Naive thymus-derived CD4-positive, alpha-beta T cell (primary cell): ENCODE measurements at regions of chr17 and their contacts with region 1.

Region 1: GRCh38 chr17:5584383-5585286 is at the start of gene NLRP1:
- DNase-seq: peak; percentile 78 to 97 (median 95)
- ATAC-seq: peak; percentile 96
- H3K4me3 ChIP-seq: peak within 1 kb of the TSS; percentile 97
- H3K4me3 Mint-ChIP-seq: peak within 1 kb of the TSS; percentile 94 to 100 (median 98)
- H3K27ac ChIP-seq: peak within 1 kb of the TSS; percentile 94
- H3K27ac Mint-ChIP-seq: peak within 1 kb of the TSS; percentile 90 to 100 (median 99)
- H3K4me1 ChIP-seq: peaks cover 44 to 67% of the 10 kb centered on the region in 2 donors
- H3K4me1 Mint-ChIP-seq: peaks cover 43 to 74% (median 63%) of the 10 kb centered on the region in 7 donors
- H3K27me3 ChIP-seq: no peaks in the 10 kb centered on the region
- H3K27me3 Mint-ChIP-seq: peaks cover 0 to 12% (median 0%) of the 10 kb centered on the region in 5 donors
- total RNA-seq, gene NLRP1: 86.6 to 360 (median 259) TPM

Region 2: DNA sequence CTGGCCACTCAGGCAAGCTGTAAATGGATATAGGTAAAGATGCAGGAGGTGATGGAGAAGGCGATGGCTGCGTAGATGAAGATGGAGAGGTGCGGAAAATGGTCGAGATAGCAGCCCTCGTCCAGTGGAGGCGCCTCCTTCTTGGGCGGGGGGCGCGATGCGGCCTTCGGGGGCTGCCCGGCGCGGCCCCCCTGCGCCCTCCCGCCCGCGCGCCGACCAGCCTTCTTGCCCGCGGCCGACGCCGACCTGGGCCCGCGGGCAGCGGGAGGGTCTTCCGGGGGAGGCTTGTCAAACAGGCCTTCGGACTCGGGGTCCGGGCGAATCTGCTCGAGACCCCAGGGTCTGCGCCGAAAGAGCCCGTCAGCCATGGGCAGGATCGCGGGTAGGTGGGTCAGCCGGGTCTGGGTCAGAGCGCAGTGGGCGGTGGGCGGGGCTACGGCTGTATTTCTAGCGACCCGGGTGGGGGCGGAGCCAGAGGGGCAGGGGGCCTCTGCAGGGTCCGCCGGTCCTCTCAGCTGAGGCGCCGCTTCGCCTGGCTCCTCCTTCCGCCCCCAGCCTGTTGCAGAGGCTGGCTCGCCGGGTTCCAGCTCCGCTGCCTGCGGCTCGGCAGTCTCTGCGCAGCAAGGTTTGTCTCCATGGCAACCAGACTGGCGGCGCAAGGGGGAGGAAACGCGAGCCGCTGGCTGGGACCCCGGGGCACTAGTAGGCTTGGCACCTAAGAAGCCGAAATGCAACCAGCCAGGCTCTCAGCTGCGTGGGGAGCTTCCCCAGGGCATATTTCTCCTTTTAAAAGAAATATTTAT is 83.8 kb before region 1 on chr17:
- CTCF ChIA-PET with region 1: no interaction called
- POLR2A ChIA-PET with region 1: no interaction called
- intact Hi-C with region 1: loop called in 1 of 2 experiments (anchors 5 kb)
- DNase-seq: peak; percentile 54 to 85 (median 75)
- ATAC-seq: peak; percentile 94
- H3K4me3 ChIP-seq: peak overlapping the region; percentile 45
- H3K4me3 Mint-ChIP-seq: peak overlapping the region; percentile 91 to 99 (median 97)
- H3K27ac ChIP-seq: peak overlapping the region; percentile 69
- H3K27ac Mint-ChIP-seq: peak overlapping the region; percentile 69 to 99 (median 88)
- H3K4me1 ChIP-seq: peaks cover 0 to 6% of the 10 kb centered on the region in 2 donors
- H3K4me1 Mint-ChIP-seq: peaks cover 7 to 30% (median 24%) of the 10 kb centered on the region in 7 donors
- H3K27me3 ChIP-seq: no peaks in the 10 kb centered on the region
- H3K27me3 Mint-ChIP-seq: peaks cover 0 to 7% (median 0%) of the 10 kb centered on the region in 5 donors

Region 3: GRCh38 chr17:6421700-6422604 is 837.3 kb after region 1 on chr17:
- CTCF ChIA-PET with region 1: interaction called, 11 read pairs
- POLR2A ChIA-PET with region 1: no interaction called
- intact Hi-C with region 1: loop called (anchors 1 kb)
- DNase-seq: peak; percentile 28 to 74 (median 56)
- ATAC-seq: peak; percentile 89
- H3K4me3 ChIP-seq: no peak overlapping the region
- H3K4me3 Mint-ChIP-seq: no peak overlapping the region
- H3K27ac ChIP-seq: no peak overlapping the region
- H3K27ac Mint-ChIP-seq: peak overlapping the region in 1 of 9 donors; percentile 25
- H3K4me1 ChIP-seq: peaks cover 0 to 5% of the 10 kb centered on the region in 2 donors
- H3K4me1 Mint-ChIP-seq: peaks cover 1 to 8% (median 3%) of the 10 kb centered on the region in 7 donors
- H3K27me3 ChIP-seq: no peaks in the 10 kb centered on the region
- H3K27me3 Mint-ChIP-seq: peaks cover 0 to 57% (median 11%) of the 10 kb centered on the region in 5 donors

Region 4: DNA sequence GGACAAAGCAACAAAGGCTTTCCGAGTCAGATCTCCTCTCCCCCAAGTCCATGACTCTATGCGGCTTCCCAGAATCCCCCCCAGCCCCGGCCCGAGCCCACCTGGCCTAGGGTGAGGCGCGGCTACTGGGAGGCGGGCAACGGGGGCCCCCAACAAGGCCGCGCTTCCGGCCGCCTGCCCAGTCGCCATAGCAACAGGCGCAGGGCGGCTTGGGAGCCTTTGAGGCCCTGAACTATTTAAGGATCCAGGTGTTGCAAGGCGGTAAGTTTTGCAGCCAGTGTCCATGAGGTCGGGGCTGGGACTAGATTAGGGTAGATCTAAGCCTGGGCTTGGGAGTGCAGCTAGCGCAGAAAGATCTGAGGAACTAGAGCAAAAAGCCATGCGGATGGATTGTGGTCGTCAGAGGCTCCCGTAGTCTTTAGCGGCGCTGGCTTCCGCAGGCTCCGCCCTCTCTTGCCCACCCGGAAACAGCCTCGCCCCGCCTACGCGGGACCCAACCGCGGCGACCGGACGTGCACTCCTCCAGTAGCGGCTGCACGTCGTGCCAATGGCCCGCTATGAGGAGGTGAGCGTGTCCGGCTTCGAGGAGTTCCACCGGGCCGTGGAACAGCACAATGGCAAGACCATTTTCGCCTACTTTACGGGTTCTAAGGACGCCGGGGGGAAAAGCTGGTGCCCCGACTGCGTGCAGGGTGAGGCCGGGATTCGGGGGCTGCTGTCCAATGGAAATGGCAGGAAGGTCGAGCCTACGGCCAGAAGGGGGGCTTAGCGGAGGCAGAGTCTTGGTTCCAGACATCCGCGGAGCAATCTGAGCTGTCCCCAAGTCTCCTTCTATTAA is 1056.1 kb after region 1 on chr17 and contains the starts of genes KIAA0753 and TXNDC17:
- CTCF ChIA-PET with region 1: no interaction called
- POLR2A ChIA-PET with region 1: no interaction called
- intact Hi-C with region 1: loop called in 1 of 2 experiments (anchors 1 kb)
- DNase-seq: peak; percentile 75 to 97 (median 85)
- ATAC-seq: peak; percentile 94
- H3K4me3 ChIP-seq: peak within 1 kb of the TSS; percentile 91
- H3K4me3 Mint-ChIP-seq: peak within 1 kb of the TSS; percentile 90 to 98 (median 96)
- H3K27ac ChIP-seq: peak within 1 kb of the TSS; percentile 86
- H3K27ac Mint-ChIP-seq: peak within 1 kb of the TSS; percentile 88 to 99 (median 97)
- H3K4me1 ChIP-seq: peaks cover 17 to 24% of the 10 kb centered on the region in 2 donors
- H3K4me1 Mint-ChIP-seq: peaks cover 35 to 64% (median 48%) of the 10 kb centered on the region in 7 donors
- H3K27me3 ChIP-seq: no peaks in the 10 kb centered on the region
- H3K27me3 Mint-ChIP-seq: no peaks in the 10 kb centered on the region
- total RNA-seq, gene KIAA0753: 12.4 to 18.4 (median 17.9) TPM
- total RNA-seq, gene TXNDC17: 14.3 to 70.3 (median 18.5) TPM